CD4-positive, alpha-beta memory T cell (primary cell): ENCODE measurements at regions of chr15 and their contacts with region 1.

Region 1: GRCh38 chr15:67065444-67066093 is at the start of gene SMAD3:
- DNase-seq: peak; percentile 66 to 82 (median 70)
- H3K4me3 ChIP-seq: peak within 1 kb of the TSS; percentile 79 to 94
- H3K4me3 Mint-ChIP-seq: peak within 1 kb of the TSS; percentile 94 to 99 (median 98)
- H3K27ac ChIP-seq: peak within 1 kb of the TSS; percentile 66
- H3K27ac Mint-ChIP-seq: peak within 1 kb of the TSS; percentile 93 to 97 (median 96)
- H3K4me1 ChIP-seq: peaks cover 58% of the 10 kb centered on the region
- H3K4me1 Mint-ChIP-seq: peaks cover 44 to 61% (median 51%) of the 10 kb centered on the region in 4 donors
- H3K27me3 ChIP-seq: no peaks in the 10 kb centered on the region
- H3K27me3 Mint-ChIP-seq: no peaks in the 10 kb centered on the region
- total RNA-seq, gene SMAD3: 189 to 197 TPM

Region 2: DNA sequence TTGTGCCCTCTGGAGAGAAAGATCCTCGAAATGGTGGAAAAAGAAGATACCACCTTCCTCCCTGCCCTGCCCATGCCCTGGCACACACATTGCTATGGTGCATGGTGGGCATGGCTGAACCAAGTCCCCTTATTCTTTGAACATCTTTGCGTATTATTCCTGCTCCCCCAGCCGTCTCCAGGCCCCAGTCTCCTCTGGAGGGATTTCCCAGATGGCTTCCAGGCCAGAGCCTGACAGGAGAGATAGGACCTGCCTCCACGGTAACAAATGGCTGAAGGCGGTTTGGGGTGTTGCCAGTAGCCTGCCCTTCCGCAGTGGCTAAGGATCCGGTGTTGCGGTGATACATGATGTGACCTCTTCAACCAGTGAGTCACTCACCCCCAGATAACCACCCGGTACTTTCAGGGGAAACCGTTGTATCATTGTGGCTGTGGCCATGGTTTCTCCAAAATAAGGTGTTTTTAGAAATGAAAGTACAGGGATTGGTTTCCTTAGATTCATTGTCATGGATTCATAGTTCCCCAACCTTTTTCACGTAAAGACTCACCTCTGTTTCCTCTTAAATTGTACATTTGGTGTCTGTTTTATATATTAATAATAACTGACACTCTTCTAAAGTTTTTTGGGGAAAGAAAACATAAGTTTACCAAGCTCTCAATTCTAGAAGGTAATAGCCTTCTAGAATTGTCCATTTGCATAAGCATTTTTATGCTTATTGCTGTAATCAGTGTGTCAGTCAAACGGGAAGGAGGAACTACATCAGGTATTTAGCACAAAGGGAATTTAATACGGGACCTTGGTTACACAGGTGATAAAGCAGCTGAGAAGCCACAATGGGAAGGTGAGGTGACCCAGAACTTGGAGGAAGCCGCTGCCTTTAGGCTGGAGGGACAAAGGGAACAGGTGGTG is 25.8 kb after region 1 on chr15:
- CTCF ChIA-PET with region 1: interaction called, 4 read pairs
- POLR2A ChIA-PET with region 1: interaction called, 382 read pairs
- intact Hi-C with region 1: no loop called
- DNase-seq: peak; percentile 69 to 91 (median 78)
- H3K4me3 ChIP-seq: peak overlapping the region; percentile 21 to 36
- H3K4me3 Mint-ChIP-seq: peak overlapping the region; percentile 73 to 90 (median 82)
- H3K27ac ChIP-seq: peak overlapping the region; percentile 67
- H3K27ac Mint-ChIP-seq: peak overlapping the region in 6 of 7 donors; percentile 93 to 99 (median 96)
- H3K4me1 ChIP-seq: peaks cover 100% of the 10 kb centered on the region
- H3K4me1 Mint-ChIP-seq: peaks cover 65 to 100% (median 89%) of the 10 kb centered on the region in 4 donors
- H3K27me3 ChIP-seq: no peaks in the 10 kb centered on the region
- H3K27me3 Mint-ChIP-seq: no peaks in the 10 kb centered on the region

Region 3: GRCh38 chr15:67114846-67115600 is 49.5 kb after region 1 on chr15:
- CTCF ChIA-PET with region 1: interaction called, 4 read pairs
- POLR2A ChIA-PET with region 1: interaction called, 51 read pairs
- intact Hi-C with region 1: loop called (anchors 2 kb)
- DNase-seq: no peak
- H3K4me3 ChIP-seq: no peak overlapping the region
- H3K4me3 Mint-ChIP-seq: peak overlapping the region; percentile 42 to 90 (median 70)
- H3K27ac ChIP-seq: peak overlapping the region; percentile 80
- H3K27ac Mint-ChIP-seq: peak overlapping the region; percentile 81 to 100 (median 92)
- H3K4me1 ChIP-seq: peaks cover 86% of the 10 kb centered on the region
- H3K4me1 Mint-ChIP-seq: peaks cover 73 to 78% (median 74%) of the 10 kb centered on the region in 4 donors
- H3K27me3 ChIP-seq: no peaks in the 10 kb centered on the region
- H3K27me3 Mint-ChIP-seq: no peaks in the 10 kb centered on the region

Region 4: GRCh38 chr15:67150028-67150860 is 84.7 kb after region 1 on chr15:
- CTCF ChIA-PET with region 1: interaction called, 3 read pairs
- POLR2A ChIA-PET with region 1: interaction called, 8 read pairs
- intact Hi-C with region 1: loop called (anchors 2 kb)
- DNase-seq: peak in 1 of 5 donors; percentile 68
- H3K4me3 ChIP-seq: peak overlapping the region; percentile 2 to 23
- H3K4me3 Mint-ChIP-seq: peak overlapping the region; percentile 47 to 90 (median 73)
- H3K27ac ChIP-seq: peak overlapping the region; percentile 27
- H3K27ac Mint-ChIP-seq: peak overlapping the region; percentile 43 to 95 (median 77)
- H3K4me1 ChIP-seq: peaks cover 68% of the 10 kb centered on the region
- H3K4me1 Mint-ChIP-seq: peaks cover 63 to 79% (median 72%) of the 10 kb centered on the region in 4 donors
- H3K27me3 ChIP-seq: no peaks in the 10 kb centered on the region
- H3K27me3 Mint-ChIP-seq: no peaks in the 10 kb centered on the region

Region 5: GRCh38 chr15:67196672-67197363 is 131.2 kb after region 1 on chr15:
- CTCF ChIA-PET with region 1: no interaction called
- POLR2A ChIA-PET with region 1: interaction called, 9 read pairs
- intact Hi-C with region 1: loop called (anchors 5 kb)
- DNase-seq: no peak
- H3K4me3 ChIP-seq: no peak overlapping the region
- H3K4me3 Mint-ChIP-seq: peak overlapping the region in 1 of 8 donors; percentile 13
- H3K27ac ChIP-seq: no peak overlapping the region
- H3K27ac Mint-ChIP-seq: peak overlapping the region; percentile 21 to 90 (median 50)
- H3K4me1 ChIP-seq: peaks cover 7% of the 10 kb centered on the region
- H3K4me1 Mint-ChIP-seq: peaks cover 19 to 25% (median 23%) of the 10 kb centered on the region in 4 donors
- H3K27me3 ChIP-seq: no peaks in the 10 kb centered on the region
- H3K27me3 Mint-ChIP-seq: no peaks in the 10 kb centered on the region

Region 6: GRCh38 chr15:67731112-67731761 is 665.7 kb after region 1 on chr15:
- CTCF ChIA-PET with region 1: no interaction called
- POLR2A ChIA-PET with region 1: no interaction called
- intact Hi-C with region 1: no loop called
- DNase-seq: no peak
- H3K4me3 ChIP-seq: no peak overlapping the region
- H3K4me3 Mint-ChIP-seq: no peak overlapping the region
- H3K27ac ChIP-seq: no peak overlapping the region
- H3K27ac Mint-ChIP-seq: no peak overlapping the region
- H3K4me1 ChIP-seq: no peaks in the 10 kb centered on the region
- H3K4me1 Mint-ChIP-seq: peaks cover 6 to 16% (median 12%) of the 10 kb centered on the region in 4 donors
- H3K27me3 ChIP-seq: no peaks in the 10 kb centered on the region
- H3K27me3 Mint-ChIP-seq: no peaks in the 10 kb centered on the region